GM12878 (cell line): ENCODE measurements at regions of chr1 and their contacts with region 1.

Region 1: DNA sequence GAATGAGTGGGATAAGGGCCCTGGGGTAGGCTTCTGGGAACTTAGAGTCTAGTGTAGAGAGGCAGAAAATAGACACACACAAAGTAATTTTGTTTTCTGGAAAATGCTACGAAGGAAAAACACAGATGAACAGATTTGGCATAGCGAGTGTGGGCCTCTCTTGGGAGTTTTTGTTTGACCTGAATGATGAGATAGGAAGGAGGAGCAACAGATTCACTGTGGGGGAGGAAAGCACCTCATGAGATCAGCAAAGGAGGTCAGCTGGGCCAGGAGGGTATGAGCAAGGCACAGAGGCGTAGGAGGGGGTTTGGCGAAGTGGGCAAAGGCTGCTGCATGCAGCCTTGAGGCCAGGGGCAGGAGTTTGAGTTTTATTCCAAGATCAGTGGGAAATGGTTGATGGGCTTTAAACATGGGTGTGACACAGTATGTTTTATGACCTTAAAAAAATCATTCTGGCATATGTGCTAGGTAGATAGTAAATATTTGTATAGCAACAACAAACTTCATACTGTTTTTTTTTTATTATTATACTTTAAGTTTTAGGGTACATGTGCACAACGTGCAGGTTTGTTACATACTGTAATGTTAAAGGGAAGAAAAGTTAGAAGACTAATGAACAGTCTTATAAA is 57.9 kb downstream of the FGGY start:
- DNase-seq: no peak
- ATAC-seq: peak; percentile 91
- H3K4me3 ChIP-seq: no peak overlapping the region
- H3K27ac ChIP-seq: peak overlapping the region; percentile 3; the same call in 1 of the 2 replicates
- H3K4me1 ChIP-seq: peaks cover 6% of the 10 kb centered on the region; the same call in 1 of the 2 replicates
- H3K27me3 ChIP-seq: no peaks in the 10 kb centered on the region
- CTCF ChIP-seq: no peak
- EP300 ChIP-seq: no peak
- POLR2A ChIP-seq: no peak
- RAD21 ChIP-seq: no peak

Region 2: GRCh38 chr1:59340411-59341307 is 14.2 kb before region 1 on chr1:
- CTCF ChIA-PET with region 1: interaction called, 9 read pairs
- POLR2A ChIA-PET with region 1: interaction called, 4 read pairs
- RAD21 ChIA-PET with region 1: interaction called, 6 read pairs
- SMC1A ChIA-PET with region 1: interaction called, 15 read pairs
- in situ Hi-C with region 1: no loop called
- intact Hi-C with region 1: no loop called
- DNase-seq: peak; percentile 28
- ATAC-seq: peak; percentile 68
- H3K4me3 ChIP-seq: no peak overlapping the region
- H3K27ac ChIP-seq: no peak overlapping the region
- H3K4me1 ChIP-seq: no peaks in the 10 kb centered on the region
- H3K27me3 ChIP-seq: no peaks in the 10 kb centered on the region
- CTCF ChIP-seq: no peak
- EP300 ChIP-seq: no peak
- POLR2A ChIP-seq: no peak
- RAD21 ChIP-seq: no peak

Region 3: DNA sequence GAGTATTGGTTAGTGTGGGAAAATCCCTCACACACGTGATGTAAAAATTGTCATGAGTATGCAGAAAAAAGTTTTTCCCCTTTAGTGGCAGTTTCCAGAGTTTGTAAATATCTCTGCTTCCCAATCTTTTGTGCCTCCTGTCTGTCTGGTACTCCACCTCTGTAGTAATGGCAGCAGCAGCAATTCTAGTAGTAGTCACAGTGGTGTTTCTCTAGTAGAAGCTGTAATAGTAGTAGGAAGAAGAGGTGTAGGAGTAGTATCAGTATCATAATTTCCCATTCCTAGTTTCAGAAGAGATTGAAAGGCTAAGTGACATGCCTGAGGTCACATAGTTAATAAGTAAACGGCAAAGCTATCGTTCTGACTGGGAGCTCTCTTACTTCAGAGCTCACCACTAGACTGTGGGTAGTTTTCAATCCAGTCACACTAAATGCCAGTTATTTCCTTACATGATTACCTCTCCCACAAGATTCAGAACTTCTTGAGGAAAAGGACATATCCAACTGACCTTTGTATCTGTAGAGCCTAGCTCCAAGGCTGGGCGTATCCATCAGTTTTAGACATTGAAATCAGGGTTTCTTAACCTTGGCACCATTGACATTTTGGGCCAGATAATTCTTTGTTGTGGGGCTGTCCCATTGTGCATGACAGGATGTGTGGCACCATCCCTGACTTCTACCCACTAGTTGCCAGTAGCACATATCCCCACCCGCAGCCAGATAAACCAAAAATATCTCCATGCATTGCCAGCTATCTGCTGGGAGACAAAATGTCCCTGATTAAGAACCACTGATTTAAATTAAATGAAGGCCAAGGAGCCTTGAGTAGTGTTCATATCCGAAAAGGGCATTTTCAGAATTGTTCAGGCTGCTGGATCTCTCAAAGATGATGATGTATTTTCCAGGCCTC is 78.0 kb after region 1 on chr1:
- CTCF ChIA-PET with region 1: no interaction called
- POLR2A ChIA-PET with region 1: interaction called, 6 read pairs
- RAD21 ChIA-PET with region 1: interaction called, 5 read pairs
- SMC1A ChIA-PET with region 1: interaction called, 31 read pairs
- in situ Hi-C with region 1: no loop called
- intact Hi-C with region 1: no loop called
- DNase-seq: peak; percentile 69
- ATAC-seq: peak; percentile 96
- H3K4me3 ChIP-seq: no peak overlapping the region
- H3K27ac ChIP-seq: peak overlapping the region; percentile 53; the same call in 1 of the 2 replicates
- H3K4me1 ChIP-seq: peaks cover 16% of the 10 kb centered on the region
- H3K27me3 ChIP-seq: no peaks in the 10 kb centered on the region
- CTCF ChIP-seq: no peak
- EP300 ChIP-seq: peak; percentile 83 to 89; a peak in 3 of 4 replicates
- POLR2A ChIP-seq: no peak
- RAD21 ChIP-seq: no peak